HEK293 (cell line): ENCODE measurements at regions of chr1 and their contacts with region 1.

Region 1: GRCh38 chr1:9588551-9589143 is at the start of gene TMEM201:
- H3K4me3 ChIP-seq: peak within 1 kb of the TSS; percentile 40
- H3K27ac ChIP-seq: peak within 1 kb of the TSS; percentile 71; the same call in 1 of the 2 replicates
- H3K4me1 ChIP-seq: peaks cover 12% of the 10 kb centered on the region
- CTCF ChIP-seq: no peak

Region 2: GRCh38 chr1:9558271-9558945 is 30.2 kb before region 1 on chr1:
- CTCF ChIA-PET with region 1: no interaction called
- POLR2A ChIA-PET with region 1: interaction called, 16 read pairs
- H3K4me3 ChIP-seq: no peak overlapping the region
- H3K27ac ChIP-seq: no peak overlapping the region
- H3K4me1 ChIP-seq: peaks cover 4% of the 10 kb centered on the region
- CTCF ChIP-seq: no peak

Region 3: DNA sequence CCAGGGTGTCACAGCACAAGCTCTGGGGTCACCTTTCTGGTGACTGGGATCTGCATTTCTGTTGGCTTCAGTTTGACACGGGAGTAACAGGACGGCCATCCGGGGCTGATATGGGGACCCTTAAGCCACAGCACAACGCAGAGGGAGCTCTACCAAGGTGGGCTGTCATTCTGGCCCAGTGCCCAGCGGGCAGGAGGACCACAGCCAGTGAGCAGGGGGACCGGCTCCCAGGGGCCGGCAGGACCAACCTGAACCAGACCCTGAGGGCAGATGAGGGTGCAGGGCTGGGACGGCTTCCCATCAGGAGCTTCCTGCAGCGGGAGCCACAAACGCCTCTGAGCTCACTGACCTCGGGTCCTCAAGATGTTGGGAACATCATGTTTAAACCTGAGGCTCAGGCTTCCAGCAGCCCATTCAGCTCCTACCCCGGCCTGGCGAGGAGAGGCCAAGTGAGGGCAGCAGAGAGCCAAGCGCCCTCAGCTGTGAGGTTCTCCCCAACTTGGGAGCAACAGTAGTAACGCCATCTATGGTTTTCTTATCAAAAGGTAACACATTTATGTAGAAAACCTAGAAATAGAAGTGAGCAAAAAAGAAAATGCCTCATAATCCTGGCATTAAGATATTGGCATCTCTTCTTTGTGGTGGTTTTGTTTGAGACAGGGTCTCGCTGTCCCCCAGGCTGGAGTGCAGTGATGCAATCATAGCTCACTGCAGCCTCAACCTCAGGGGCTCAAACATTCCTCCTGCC is 26.8 kb after region 1 on chr1:
- CTCF ChIA-PET with region 1: interaction called, 10 read pairs
- POLR2A ChIA-PET with region 1: interaction called, 3 read pairs
- H3K4me3 ChIP-seq: no peak overlapping the region
- H3K27ac ChIP-seq: no peak overlapping the region
- H3K4me1 ChIP-seq: no peaks in the 10 kb centered on the region
- CTCF ChIP-seq: peak; percentile 70